Panc1 (cell line): ENCODE measurements at regions of chr10 and their contacts with region 1.

Region 1: DNA sequence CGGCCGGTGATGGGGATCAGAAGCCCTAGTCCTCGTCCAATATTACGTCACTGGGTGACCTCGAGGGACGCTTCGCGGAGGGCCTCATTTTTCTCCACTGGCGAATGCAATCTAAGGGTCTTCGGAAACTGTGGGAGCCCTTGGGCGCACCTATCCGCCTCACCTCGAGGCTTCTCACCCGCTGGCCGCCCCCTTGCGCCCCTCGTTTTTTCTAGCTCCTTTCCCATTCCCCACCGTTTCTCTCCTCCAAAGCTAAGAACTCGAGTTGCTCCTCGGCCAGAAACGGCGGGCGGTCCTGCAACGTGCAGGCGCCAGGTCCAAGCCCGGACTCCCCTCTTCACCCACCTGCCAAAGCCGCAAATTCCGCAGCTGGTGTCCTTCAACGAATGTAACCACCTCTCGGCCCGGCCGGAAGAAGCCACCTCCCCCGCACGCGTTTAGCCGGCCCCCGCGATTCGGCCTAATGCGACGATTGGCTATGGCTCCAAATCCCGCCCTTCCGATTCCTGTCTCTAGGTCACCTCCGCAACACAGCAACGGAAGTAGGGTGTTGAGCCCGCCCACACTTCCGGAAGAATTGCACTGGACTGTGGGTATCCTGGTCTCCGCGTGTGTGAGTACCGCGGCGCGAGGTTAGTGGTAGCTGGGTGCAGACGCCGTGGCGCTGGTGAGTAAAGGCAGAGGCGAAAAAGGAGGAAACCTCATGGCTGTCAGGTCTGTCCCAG is at the starts of genes ATP5MK and PDCD11:
- DNase-seq: peak; percentile 89
- ATAC-seq: peak; percentile 100
- H3K4me3 ChIP-seq: peak within 1 kb of the TSS; percentile 94 to 95
- H3K27ac ChIP-seq: peak within 1 kb of the TSS; percentile 97
- H3K4me1 ChIP-seq: peaks cover 27% of the 10 kb centered on the region
- H3K27me3 ChIP-seq: no peaks in the 10 kb centered on the region
- CTCF ChIP-seq: no peak
- total RNA-seq, gene ATP5MK: 694 TPM
- total RNA-seq, gene PDCD11: 92.8 TPM

Region 2: DNA sequence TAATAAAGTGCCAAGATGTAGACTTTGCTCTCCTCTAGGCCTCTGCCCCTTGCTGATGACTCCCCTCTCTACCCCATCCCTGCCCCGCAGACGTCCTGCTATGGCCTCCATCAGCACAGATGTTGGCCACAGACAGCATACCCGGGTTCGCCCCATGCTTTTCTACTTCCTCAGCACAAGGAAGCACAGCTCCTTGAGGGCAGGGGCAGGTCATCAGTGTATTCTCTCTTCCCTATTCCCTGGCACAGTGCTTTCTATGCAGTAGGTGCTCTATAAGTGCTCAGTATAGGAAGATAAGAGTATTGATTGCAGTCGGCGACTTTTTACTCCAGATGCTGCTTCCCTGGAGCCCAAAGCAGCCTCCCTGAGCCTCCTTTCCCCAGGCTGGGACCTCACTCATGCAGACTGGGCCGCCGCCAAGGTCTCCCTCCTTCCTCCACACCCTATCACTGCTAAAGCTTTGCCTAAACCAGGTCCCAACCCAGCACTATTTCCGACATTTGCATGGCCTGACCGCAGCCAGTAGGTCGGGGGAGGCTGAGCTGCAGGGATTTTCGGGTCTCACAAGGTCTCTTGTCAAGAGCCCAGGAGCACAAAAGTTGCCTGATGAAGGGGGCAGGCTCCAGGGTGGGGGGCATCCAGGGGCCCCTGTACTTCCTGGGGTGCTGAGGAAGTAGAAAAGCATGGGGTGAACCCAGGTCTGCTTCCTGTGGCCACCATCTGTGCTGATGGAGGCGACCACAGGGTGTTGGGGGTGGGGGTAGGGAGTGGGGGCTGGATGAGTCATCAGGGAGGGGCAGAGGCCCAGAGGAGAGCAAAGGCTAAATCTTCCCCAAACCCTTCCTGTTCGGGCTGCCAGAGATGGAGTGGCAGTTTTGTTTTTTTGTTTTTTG is 74.8 kb after region 1 on chr10:
- CTCF ChIA-PET with region 1: no interaction called
- POLR2A ChIA-PET with region 1: no interaction called
- in situ Hi-C with region 1: loop called (anchors 10 kb)
- intact Hi-C with region 1: no loop called
- DNase-seq: no peak
- ATAC-seq: no peak
- H3K4me3 ChIP-seq: no peak overlapping the region
- H3K27ac ChIP-seq: no peak overlapping the region
- H3K4me1 ChIP-seq: no peaks in the 10 kb centered on the region
- H3K27me3 ChIP-seq: no peaks in the 10 kb centered on the region; the same call in 1 of the 2 replicates
- CTCF ChIP-seq: no peak